ENCODE measurements at regions of chr3 and their contacts with region 1.

Region 1: DNA sequence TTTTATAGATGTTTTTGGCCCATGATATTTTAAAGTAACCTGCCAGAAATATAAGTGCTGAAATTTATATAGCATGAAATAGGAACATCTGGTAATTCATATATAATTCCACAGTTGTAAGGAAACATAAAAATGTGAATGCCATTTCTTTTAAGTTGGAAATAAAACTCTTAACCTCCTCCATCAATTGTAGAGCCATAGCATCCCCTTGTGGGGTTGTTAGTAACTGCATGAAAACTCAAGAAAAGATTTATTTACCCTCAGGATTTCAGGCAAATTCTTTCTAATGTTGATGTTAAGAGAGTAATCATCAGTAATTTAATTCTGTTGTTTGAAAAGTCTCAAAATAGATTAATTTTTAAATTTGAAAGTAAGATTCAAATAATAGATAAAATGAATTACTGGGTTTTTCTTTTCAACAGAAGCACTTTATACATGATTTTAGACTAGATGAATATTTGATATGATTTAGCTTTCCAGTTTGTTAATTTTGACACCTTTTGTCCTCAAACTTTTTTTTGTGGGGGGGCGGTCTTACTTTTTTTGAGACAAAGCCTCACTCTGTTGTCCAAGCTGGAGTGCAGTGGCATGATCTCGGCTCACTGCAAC is 74.7 kb downstream of the RASA2 start:
- DNase-seq: peak; percentile 11
- H3K4me3 ChIP-seq: no peak overlapping the region
- H3K27ac ChIP-seq: no peak overlapping the region
- H3K4me1 ChIP-seq: peaks cover 5 to 21% (median 7%) of the 10 kb centered on the region in 4 donors
- H3K27me3 ChIP-seq: no peaks in the 10 kb centered on the region
- CTCF ChIP-seq: peak; percentile 95 to 99 (median 97)
- EP300 ChIP-seq: no peak
- POLR2A ChIP-seq: no peak

Region 2: GRCh38 chr3:141303481-141304223 is 257.9 kb before region 1 on chr3:
- in situ Hi-C with region 1: loop called in 2 of 4 experiments (anchors 10 to 25 kb)
- intact Hi-C with region 1: loop called (anchors 10 kb)
- DNase-seq: peak; percentile 60
- H3K4me3 ChIP-seq: no peak overlapping the region
- H3K27ac ChIP-seq: no peak overlapping the region
- H3K4me1 ChIP-seq: no peaks in the 10 kb centered on the region
- H3K27me3 ChIP-seq: no peaks in the 10 kb centered on the region
- CTCF ChIP-seq: peak; percentile 81 to 91 (median 85)
- EP300 ChIP-seq: no peak
- POLR2A ChIP-seq: no peak

Region 3: DNA sequence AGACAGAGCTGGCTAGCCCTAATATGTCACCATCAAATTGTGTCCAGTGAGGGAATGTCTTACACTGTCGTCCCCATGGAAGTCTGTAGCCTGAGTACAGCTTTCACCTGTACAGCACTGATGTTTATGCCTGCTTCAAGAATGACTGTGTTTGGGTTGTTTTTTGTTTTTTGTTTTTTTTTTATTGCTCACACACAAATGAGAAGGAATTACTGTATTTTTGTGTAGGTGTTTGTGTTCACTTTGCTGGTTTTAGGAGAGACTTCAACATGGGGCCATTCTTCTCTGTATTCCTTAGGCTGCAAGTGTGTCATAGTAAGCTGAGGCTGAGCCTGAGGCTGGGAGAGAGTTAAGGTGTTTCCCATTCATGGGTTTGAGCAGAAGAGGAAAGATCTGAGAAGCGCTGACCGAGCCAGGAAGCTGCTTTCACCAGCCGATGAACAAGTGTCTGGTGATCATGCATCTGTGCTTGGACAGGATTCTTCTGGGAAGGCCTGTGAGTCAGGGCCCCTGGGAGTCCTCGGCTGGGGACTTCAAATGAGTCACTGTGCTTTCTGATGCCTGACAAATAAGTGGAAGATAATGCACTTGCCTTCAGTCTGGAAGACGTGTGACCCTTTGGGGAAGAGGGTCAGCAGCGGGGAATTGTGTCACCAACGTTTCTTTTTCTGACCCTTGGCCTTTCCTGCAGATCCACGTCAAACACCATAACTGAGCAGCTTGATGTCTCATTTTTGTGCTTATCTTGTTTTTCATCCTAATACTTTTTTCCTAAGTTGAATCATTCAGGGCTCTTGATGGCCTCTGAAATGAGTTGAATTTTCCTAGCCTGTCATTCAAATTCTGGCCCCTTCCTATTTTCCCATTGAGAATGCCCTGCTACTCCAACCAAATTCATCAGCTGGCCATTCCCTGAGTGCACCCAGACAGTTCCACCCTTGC is 229.9 kb before region 1 on chr3:
- in situ Hi-C with region 1: no loop called
- intact Hi-C with region 1: no loop called
- DNase-seq: peak; percentile 35
- H3K4me3 ChIP-seq: no peak overlapping the region
- H3K27ac ChIP-seq: peak overlapping the region; percentile 43 to 75 (median 52)
- H3K4me1 ChIP-seq: peaks cover 6 to 60% (median 42%) of the 10 kb centered on the region in 4 donors
- H3K27me3 ChIP-seq: no peaks in the 10 kb centered on the region
- CTCF ChIP-seq: no peak
- EP300 ChIP-seq: no peak
- POLR2A ChIP-seq: no peak

Region 4: GRCh38 chr3:141370065-141370533 is 191.4 kb before region 1 on chr3:
- in situ Hi-C with region 1: loop called in 1 of 4 experiments (anchors 25 kb)
- intact Hi-C with region 1: no loop called
- DNase-seq: peak; percentile 50
- H3K4me3 ChIP-seq: no peak overlapping the region
- H3K27ac ChIP-seq: peak overlapping the region; percentile 88 to 95 (median 91)
- H3K4me1 ChIP-seq: peaks cover 23 to 51% (median 40%) of the 10 kb centered on the region in 4 donors
- H3K27me3 ChIP-seq: no peaks in the 10 kb centered on the region
- CTCF ChIP-seq: peak in 3 of 5 experiments; percentile 16 to 36 (median 23)
- EP300 ChIP-seq: no peak
- POLR2A ChIP-seq: no peak

Region 5: GRCh38 chr3:141460097-141460704 is 101.3 kb before region 1 on chr3:
- in situ Hi-C with region 1: loop called in 2 of 4 experiments (anchors 5 to 10 kb)
- intact Hi-C with region 1: loop called (anchors 1 kb)
- DNase-seq: peak; percentile 90
- H3K4me3 ChIP-seq: no peak overlapping the region
- H3K27ac ChIP-seq: no peak overlapping the region
- H3K4me1 ChIP-seq: peaks cover 0 to 7% (median 6%) of the 10 kb centered on the region in 4 donors
- H3K27me3 ChIP-seq: no peaks in the 10 kb centered on the region
- CTCF ChIP-seq: peak; percentile 76 to 86 (median 82)
- EP300 ChIP-seq: no peak
- POLR2A ChIP-seq: no peak

Region 6: GRCh38 chr3:141477224-141477623 is 84.3 kb before region 1 on chr3:
- in situ Hi-C with region 1: loop called in 3 of 4 experiments (anchors 5 kb)
- intact Hi-C with region 1: no loop called
- DNase-seq: no peak
- H3K4me3 ChIP-seq: no peak overlapping the region
- H3K27ac ChIP-seq: no peak overlapping the region
- H3K4me1 ChIP-seq: peaks cover 0 to 5% (median 0%) of the 10 kb centered on the region in 4 donors
- H3K27me3 ChIP-seq: no peaks in the 10 kb centered on the region
- CTCF ChIP-seq: no peak
- EP300 ChIP-seq: no peak
- POLR2A ChIP-seq: no peak

Measured in transverse colon (tissue), 4 donors.